ENCODE measurements at regions of chr3 and their contacts with region 1.

Region 1: GRCh38 chr3:31227131-31227562 is 305.6 kb upstream of the STT3B start:
- DNase-seq: no peak
- ATAC-seq: peak; percentile 54
- H3K4me3 Mint-ChIP-seq: no peak overlapping the region
- H3K27ac Mint-ChIP-seq: peak overlapping the region; percentile 56
- H3K4me1 Mint-ChIP-seq: peaks cover 89% of the 10 kb centered on the region
- H3K27me3 Mint-ChIP-seq: no peaks in the 10 kb centered on the region

Region 2: DNA sequence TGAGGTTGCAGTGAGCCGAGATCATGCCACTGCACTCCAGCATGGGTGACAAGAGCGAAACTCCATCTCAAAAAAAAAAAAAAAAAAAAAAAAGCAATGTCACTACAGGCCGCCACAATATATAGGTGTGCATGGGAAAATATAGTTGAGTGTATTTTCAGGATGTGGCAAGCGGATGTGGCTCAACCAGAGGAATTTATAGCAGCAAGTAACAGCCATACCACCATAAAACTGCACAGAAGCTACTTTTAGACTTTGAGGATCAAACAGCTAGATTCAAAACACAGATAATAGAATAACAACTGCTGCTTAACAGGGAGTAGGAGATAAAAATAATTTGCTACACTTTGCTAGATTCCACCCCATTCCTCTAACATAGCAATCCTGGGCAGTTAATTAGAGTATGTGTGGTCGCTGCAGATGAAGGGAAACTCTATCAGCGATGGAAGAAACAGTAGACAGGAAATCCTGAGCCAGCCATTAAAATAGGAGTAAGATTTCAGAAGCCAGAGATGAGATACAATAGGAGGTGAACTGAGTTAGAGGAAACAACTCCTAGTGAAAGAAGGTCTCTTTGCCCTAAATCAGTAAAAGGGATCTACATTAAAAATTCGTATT is 13.2 kb before region 1 on chr3:
- CTCF ChIA-PET with region 1: interaction called, 7 read pairs
- POLR2A ChIA-PET with region 1: no interaction called
- intact Hi-C with region 1: loop called in 1 of 2 experiments (anchors 1 kb)
- DNase-seq: peak; percentile 48
- ATAC-seq: peak; percentile 4
- H3K4me3 Mint-ChIP-seq: no peak overlapping the region
- H3K27ac Mint-ChIP-seq: peak overlapping the region; percentile 82
- H3K4me1 Mint-ChIP-seq: peaks cover 90% of the 10 kb centered on the region
- H3K27me3 Mint-ChIP-seq: no peaks in the 10 kb centered on the region

Region 3: DNA sequence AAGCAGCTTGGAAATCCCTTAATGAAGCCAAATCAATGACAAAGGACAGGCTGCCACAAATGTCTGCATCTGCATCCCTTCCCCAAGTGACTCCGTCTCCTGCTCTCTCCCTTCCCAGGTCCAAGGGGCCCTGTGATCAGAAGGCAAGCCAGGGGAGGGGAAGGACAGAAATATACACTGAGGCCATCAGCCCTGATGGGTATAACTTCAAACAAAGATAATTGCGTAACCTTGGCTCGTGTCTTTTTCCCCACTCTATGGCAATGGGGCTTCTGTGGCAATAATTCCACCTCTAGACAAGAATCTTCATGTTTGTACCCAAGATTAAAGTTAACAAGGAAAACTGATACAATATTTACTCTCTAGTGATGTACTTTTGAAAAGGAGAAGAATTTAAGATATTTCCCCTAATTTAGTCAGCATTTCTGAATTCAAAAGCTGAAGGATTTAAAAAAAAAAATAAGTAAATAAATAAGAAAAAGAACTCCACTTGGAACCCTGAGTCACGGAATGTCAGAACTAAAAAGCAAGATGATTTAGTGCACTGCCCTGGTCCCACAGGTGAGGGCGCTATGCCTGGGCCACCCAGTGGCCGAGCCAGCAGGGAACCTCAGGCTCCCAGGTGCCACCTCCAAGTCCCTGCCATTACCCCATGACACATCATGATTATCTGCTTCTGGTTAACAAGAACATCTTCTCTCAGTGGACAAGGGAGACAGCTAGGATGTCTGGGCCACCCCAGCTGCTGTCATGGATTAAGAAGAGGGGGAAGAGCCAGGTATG is 460.1 kb after region 1 on chr3:
- CTCF ChIA-PET with region 1: no interaction called
- POLR2A ChIA-PET with region 1: no interaction called
- intact Hi-C with region 1: no loop called
- DNase-seq: no peak
- ATAC-seq: no peak
- H3K4me3 Mint-ChIP-seq: no peak overlapping the region
- H3K27ac Mint-ChIP-seq: no peak overlapping the region
- H3K4me1 Mint-ChIP-seq: peaks cover 3% of the 10 kb centered on the region
- H3K27me3 Mint-ChIP-seq: no peaks in the 10 kb centered on the region

Region 4: GRCh38 chr3:32117324-32117723 is 890.2 kb after region 1 on chr3:
- CTCF ChIA-PET with region 1: no interaction called
- POLR2A ChIA-PET with region 1: no interaction called
- intact Hi-C with region 1: loop called in 1 of 2 experiments (anchors 10 kb)
- DNase-seq: no peak
- ATAC-seq: no peak
- H3K4me3 Mint-ChIP-seq: no peak overlapping the region
- H3K27ac Mint-ChIP-seq: no peak overlapping the region
- H3K4me1 Mint-ChIP-seq: peaks cover 55% of the 10 kb centered on the region
- H3K27me3 Mint-ChIP-seq: no peaks in the 10 kb centered on the region